ENCODE measurements at regions of chr16 and their contacts with region 1.

Region 1: DNA sequence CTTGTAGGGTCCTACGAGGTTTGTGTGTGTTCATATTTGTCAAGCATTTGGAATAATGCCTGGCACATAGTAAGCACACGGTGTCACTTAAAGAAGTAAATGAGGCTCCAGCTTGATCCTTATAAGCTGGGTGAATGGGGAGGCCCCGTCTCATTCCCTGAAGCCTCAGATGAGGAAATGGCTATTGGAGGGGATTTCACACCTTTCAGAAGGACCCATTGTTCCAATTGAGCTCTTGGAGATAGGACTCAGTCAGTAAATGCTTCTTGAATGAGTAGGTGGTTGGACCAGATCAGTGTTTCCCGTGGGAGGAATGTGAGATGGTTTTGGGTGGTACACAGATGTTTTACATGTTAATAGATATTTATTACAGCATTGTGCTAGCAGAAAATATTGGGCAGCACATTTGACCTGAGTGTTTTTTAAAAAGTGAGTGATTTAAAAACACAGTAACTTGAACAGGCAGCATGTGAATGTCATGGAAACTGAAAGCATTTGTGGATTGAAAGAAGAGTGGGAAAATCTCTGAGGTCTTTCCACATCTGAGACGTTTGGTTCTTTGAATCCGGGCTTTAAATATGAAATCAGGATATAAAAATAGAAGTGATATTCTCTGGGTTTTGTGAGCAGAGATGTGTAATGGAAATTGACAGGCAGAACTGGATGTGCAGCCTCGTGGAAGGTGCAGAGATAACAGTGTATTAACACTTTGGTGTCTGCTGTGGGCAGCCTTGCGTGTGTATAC is 36.4 kb upstream of the ARHGAP17 start:
- DNase-seq: no peak
- H3K4me3 ChIP-seq: peak overlapping the region; percentile 5 to 37 (median 9)
- H3K27ac ChIP-seq: peak overlapping the region; percentile 65 to 70
- H3K4me1 ChIP-seq: peaks cover 0 to 5% of the 10 kb centered on the region in 2 donors
- H3K27me3 ChIP-seq: no peaks in the 10 kb centered on the region
- CTCF ChIP-seq: no peak
- POLR2A ChIP-seq: no peak

Region 2: DNA sequence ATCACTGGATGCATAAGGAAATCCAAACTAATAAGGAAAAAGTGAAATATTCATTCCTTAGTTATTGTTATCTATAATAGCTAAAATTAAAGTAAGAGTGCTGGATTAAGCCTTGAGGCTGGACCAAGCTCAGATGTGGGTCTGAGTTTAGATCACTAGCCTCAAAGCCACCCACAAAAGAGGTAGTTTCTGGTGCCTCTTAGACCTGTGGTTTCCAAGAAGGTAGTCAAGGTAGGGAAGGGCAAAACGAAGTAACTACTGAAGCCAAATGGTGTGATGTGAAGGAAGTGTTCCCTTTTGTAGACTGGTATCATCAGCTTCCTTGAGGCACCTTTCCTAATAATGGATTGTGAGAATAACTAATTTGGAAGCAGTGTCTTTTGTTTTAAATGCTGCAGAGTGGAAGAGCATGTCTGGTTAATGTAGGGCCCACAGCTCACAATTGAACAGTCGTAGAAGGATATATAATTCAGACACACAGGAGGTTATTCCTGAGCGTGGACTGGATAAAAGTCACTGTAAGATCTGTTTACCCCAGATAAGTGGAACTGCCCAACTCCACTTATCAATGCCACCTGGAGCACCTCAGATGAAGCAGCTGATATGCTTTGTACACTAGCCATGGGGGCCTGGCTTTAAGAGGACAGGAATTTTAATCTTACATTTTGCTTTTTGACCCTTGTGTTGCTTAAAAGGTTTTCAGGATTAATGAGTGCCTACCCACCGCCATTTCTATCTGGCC is 28.2 kb after region 1 on chr16:
- intact Hi-C with region 1: no loop called
- DNase-seq: no peak
- H3K4me3 ChIP-seq: no peak overlapping the region
- H3K27ac ChIP-seq: no peak overlapping the region
- H3K4me1 ChIP-seq: no peaks in the 10 kb centered on the region
- H3K27me3 ChIP-seq: no peaks in the 10 kb centered on the region
- CTCF ChIP-seq: no peak
- POLR2A ChIP-seq: no peak

Region 3: DNA sequence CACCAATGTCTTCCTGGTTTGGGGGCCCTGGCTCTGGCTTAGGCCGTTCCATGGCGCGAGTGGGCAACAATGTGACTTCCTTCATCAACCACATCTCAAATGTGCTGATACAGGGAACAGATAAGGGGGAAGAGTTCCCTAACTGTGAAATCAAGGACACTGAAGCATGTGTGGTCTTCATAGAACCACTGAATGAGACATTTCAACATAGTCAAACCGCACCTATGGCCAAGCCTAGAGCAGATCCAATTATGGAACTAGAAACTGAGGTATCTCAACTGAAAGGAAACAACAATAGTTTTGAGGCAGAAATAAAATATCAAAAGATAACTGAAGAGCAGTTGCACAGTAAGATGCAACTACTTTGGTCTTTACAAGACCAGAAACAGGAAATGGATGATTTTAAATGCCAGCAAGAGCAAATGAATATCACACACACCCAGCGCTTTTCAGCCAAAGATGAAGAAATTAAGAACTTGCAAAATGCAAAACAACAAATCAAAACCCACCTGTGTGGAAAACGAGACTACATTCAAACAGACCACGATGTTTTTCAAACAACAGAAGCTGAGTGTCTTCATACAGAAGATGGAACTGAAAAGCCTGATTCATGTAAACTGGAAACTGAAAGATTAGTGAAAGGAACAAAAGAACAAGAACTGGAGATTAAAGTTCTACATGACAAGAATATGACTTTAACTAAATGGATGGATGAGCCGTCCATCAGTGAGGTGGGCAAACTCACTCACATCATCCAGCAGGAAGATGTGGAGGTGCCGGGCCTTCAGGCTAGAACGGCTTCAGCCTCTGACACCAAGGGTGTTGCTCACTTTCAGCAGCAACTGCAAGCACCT is 41.9 kb after region 1 on chr16:
- intact Hi-C with region 1: loop called (anchors 2 kb)
- DNase-seq: no peak
- H3K4me3 ChIP-seq: no peak overlapping the region
- H3K27ac ChIP-seq: no peak overlapping the region
- H3K4me1 ChIP-seq: no peaks in the 10 kb centered on the region
- H3K27me3 ChIP-seq: no peaks in the 10 kb centered on the region
- CTCF ChIP-seq: no peak
- POLR2A ChIP-seq: no peak

Measured in breast epithelium (tissue), 4 donors.